ENCODE measurements at regions of chr2 and their contacts with region 1.

Region 1: DNA sequence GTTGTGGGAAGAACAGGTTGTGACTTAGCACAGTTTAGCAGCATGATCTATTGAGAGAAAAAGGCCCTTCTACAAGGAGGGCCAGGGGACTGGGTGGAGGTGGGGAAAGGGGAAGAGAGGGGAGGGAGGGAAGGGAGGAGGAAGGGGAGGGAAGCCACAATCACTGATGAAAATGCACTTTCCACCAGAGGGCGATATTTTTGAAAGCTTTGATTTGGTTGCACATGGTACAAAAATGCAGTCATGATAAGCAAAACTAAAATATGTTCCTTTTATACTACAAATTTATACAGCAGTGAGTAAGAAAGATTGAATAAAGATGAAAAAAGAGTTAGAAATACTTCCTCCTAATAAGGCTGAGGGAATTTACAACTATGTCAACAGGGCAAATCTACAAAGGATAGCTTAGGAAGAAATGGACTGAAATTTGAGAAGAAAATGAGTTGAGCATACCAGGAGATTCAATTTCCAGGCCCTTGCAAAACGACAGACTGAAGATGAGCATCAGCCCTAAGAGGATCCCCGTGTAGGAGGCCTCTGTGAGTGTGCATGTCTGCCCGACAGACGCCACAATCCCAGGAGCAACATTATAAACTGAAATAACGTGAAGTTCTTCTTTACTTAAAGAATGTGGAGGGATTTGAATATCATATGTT is 17.2 kb downstream of the SH3YL1 start:
- DNase-seq: peak; percentile 59
- H3K4me3 ChIP-seq: no peak overlapping the region
- H3K27ac ChIP-seq: no peak overlapping the region
- H3K4me1 ChIP-seq: no peaks in the 10 kb centered on the region
- H3K27me3 ChIP-seq: no peaks in the 10 kb centered on the region
- CTCF ChIP-seq: peak; percentile 32 to 65
- POLR2A ChIP-seq: no peak

Region 2: GRCh38 chr2:202945-203344 is 43.7 kb before region 1 on chr2:
- CTCF ChIA-PET with region 1: no interaction called
- POLR2A ChIA-PET with region 1: no interaction called
- dilution Hi-C with region 1: no loop called
- intact Hi-C with region 1: no loop called
- DNase-seq: no peak
- H3K4me3 ChIP-seq: no peak overlapping the region
- H3K27ac ChIP-seq: no peak overlapping the region
- H3K4me1 ChIP-seq: no peaks in the 10 kb centered on the region
- H3K27me3 ChIP-seq: no peaks in the 10 kb centered on the region
- CTCF ChIP-seq: no peak
- POLR2A ChIP-seq: no peak

Region 3: DNA sequence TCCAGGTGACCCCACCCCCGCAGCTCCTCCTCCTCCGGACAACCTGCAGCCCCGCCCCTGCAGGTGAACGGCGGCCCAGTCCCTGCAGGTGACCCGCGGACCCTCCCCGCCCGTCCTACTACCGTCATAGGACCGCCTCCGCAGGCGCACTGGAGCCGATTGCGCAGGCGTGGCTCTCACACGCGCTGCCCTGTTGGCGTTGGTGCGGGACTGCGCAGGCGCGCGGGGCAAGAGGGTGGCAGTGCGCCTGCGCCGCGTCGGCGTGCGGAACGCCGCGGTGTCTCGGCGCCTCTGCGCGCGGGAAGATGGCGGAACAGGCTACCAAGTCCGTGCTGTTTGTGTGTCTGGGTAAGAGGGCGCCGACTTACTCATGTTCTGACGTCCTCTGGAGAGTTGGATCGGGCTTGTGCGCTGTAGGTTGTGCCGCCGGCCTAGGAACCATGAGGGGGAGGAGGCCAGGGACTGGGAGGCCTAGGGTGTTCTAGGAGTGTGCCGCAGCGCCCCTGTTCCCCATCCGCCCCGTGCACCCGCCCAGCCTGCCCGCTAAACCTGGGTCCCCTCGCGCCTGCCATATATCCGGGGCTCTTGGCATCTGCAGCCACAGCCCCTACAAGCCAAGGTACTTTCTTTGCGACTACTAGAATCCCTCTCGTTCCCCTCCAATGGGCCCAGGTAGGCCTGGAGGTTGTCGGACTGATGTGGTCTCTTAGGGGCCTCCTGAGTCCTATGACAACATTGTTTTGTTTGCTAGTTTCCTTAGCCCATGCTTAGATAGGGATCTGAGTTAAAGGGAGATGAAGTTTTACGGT is 18.2 kb after region 1 on chr2 and contains the start of gene ACP1:
- CTCF ChIA-PET with region 1: interaction called, 8 read pairs
- POLR2A ChIA-PET with region 1: no interaction called
- dilution Hi-C with region 1: no loop called
- intact Hi-C with region 1: loop called (anchors 1 kb)
- DNase-seq: peak; percentile 97
- H3K4me3 ChIP-seq: peak within 1 kb of the TSS; percentile 75 to 90 (median 79)
- H3K27ac ChIP-seq: peak within 1 kb of the TSS; percentile 42
- H3K4me1 ChIP-seq: peaks cover 17% of the 10 kb centered on the region
- H3K27me3 ChIP-seq: no peaks in the 10 kb centered on the region
- CTCF ChIP-seq: no peak
- POLR2A ChIP-seq: peak; percentile 90
- total RNA-seq, gene ACP1: 76.2 and 80.2 TPM in 2 replicates

Region 4: GRCh38 chr2:290090-290722 is 43.6 kb after region 1 on chr2:
- CTCF ChIA-PET with region 1: interaction called, 19 read pairs
- POLR2A ChIA-PET with region 1: no interaction called
- dilution Hi-C with region 1: no loop called
- intact Hi-C with region 1: loop called (anchors 1 kb)
- DNase-seq: peak; percentile 67
- H3K4me3 ChIP-seq: peak overlapping the region in 1 of 3 experiments; percentile 19
- H3K27ac ChIP-seq: no peak overlapping the region
- H3K4me1 ChIP-seq: peaks cover 3% of the 10 kb centered on the region
- H3K27me3 ChIP-seq: peaks cover 16 to 37% of the 10 kb centered on the region in 2 experiments
- CTCF ChIP-seq: peak; percentile 66 to 75
- POLR2A ChIP-seq: no peak

Region 5: DNA sequence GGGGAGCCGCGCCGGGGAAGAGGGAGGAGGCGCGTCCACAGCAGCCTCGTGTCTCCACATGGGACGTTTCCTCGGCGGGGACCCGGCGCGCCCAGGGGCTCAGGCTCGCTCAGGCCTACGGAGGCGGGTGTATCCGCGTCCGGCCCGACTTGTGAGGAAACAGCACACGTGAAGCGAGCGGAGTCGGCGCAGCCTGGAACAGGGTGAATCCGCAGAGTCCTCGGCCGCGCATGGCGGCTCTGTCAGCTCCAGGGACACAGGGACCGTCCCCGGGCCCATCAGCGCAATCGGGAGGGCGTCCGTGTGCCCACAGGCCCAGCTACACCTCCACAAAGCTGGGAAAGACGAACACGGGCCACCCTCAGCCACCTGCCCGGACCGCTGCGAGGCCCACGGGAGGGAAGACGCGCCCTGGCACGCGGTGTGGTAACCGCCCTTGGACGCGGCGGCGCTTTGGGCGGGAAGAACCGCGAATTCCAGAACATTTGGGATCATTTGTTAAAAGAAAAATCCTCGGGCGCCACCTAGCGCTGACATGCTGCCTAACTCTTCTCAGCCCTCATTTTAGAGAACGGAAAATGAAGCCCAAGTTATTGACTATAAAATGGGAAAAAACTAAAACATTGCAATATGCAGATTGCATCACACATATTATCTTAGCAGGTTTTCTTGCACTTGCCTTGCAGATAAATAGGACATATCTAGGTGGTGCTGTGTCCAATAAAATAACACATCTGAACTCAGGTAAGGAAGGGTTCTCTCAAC is 390.2 kb after region 1 on chr2:
- CTCF ChIA-PET with region 1: interaction called, 9 read pairs
- POLR2A ChIA-PET with region 1: no interaction called
- dilution Hi-C with region 1: no loop called
- intact Hi-C with region 1: loop called (anchors 1 kb)
- DNase-seq: peak; percentile 53
- H3K4me3 ChIP-seq: no peak overlapping the region
- H3K27ac ChIP-seq: no peak overlapping the region
- H3K4me1 ChIP-seq: no peaks in the 10 kb centered on the region
- H3K27me3 ChIP-seq: no peaks in the 10 kb centered on the region
- CTCF ChIP-seq: peak; percentile 66 to 68
- POLR2A ChIP-seq: no peak

Region 6: DNA sequence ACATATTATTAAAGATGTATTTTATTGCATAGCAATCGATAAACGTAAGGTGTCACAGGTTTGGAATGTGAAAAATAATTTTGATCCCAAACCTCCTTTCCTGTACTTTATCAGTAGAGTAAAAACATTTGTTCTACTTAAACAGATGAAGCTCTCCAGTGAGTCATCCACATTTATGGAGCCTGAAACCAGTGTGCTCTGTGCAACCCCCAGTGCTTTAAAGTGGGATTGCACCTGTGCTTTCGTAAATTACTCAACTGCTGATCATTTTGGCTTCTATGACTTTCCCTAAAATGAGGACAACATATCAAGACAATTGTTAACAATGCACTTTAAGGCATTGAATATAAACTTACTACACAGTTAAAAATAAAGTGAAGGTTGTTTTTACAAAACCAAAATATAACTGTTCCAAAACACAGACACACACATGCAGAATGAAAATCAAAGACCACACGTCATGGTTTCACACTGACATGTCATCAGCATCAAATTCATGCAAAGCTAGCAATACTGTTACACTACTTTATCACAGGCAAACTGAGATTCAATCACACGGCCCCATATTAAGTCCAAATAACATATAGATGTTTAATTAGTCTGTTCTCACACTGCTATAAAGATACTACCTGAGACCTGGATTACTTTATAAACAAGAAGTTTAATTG is 420.8 kb after region 1 on chr2:
- CTCF ChIA-PET with region 1: interaction called, 17 read pairs
- POLR2A ChIA-PET with region 1: no interaction called
- dilution Hi-C with region 1: no loop called
- intact Hi-C with region 1: loop called (anchors 1 kb)
- DNase-seq: peak; percentile 75
- H3K4me3 ChIP-seq: no peak overlapping the region
- H3K27ac ChIP-seq: no peak overlapping the region
- H3K4me1 ChIP-seq: peaks cover 3% of the 10 kb centered on the region
- H3K27me3 ChIP-seq: no peaks in the 10 kb centered on the region
- CTCF ChIP-seq: peak; percentile 53 to 55
- POLR2A ChIP-seq: no peak

Region 7: DNA sequence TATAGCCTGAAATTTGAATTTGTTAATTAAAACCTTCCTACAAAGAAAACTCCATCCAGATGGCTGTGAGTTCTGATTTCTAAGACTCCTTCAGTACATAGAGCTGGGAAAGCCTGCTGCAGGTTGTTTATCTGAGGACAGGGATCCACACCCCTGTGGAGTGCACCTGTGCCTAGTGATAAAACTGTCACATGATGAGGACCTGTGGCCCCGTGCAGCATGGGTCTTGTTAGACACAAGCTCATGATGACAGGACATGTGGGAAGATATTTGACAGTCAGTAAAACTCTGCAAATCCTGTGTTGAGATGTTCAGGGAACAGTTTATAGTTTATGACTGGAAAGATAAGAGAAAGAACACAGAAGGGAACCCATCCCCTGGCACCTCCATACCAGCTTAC is 563.8 kb after region 1 on chr2:
- CTCF ChIA-PET with region 1: no interaction called
- POLR2A ChIA-PET with region 1: no interaction called
- dilution Hi-C with region 1: no loop called
- intact Hi-C with region 1: no loop called
- DNase-seq: no peak
- H3K4me3 ChIP-seq: no peak overlapping the region
- H3K27ac ChIP-seq: no peak overlapping the region
- H3K4me1 ChIP-seq: no peaks in the 10 kb centered on the region
- H3K27me3 ChIP-seq: no peaks in the 10 kb centered on the region
- CTCF ChIP-seq: no peak
- POLR2A ChIP-seq: no peak